OCI-LY7 (cell line): ENCODE measurements at regions of chr12 and their contacts with region 1.

Region 1: GRCh38 chr12:11793921-11794710 is 144.6 kb downstream of the ETV6 start:
- DNase-seq: no peak
- H3K4me3 ChIP-seq: no peak overlapping the region
- H3K27ac ChIP-seq: no peak overlapping the region
- H3K4me1 ChIP-seq: peaks cover 21% of the 10 kb centered on the region
- CTCF ChIP-seq: no peak

Region 2: DNA sequence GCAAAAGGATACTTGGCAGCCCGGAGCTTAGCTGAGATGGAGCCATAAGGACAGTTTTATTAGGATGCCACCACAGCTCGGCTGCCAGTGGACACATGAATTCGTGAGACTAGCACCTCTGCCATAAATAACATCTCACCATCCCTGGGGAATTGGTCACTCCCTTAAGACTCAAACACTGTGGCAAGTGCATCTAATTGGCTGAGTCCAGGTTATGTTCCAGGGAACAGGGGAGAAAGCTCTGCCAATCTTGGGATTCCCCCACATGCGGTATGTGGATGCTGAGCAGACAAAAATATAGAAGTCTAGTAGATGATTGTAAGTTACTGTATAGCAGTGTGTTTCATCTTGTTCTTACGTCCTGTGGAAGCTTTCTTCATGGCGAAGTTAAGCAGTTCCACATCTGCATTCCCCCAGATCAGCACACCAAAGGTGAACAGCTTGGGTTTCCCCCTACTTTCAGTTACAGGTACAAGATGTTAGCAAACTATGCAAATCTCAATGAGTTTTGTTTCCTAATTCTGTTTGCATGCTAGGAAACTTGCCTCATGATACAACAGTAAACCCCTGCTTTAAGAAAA is 13.5 kb before region 1 on chr12:
- CTCF ChIA-PET with region 1: no interaction called
- POLR2A ChIA-PET with region 1: interaction called, 12 read pairs
- intact Hi-C with region 1: no loop called
- DNase-seq: peak; percentile 58
- H3K4me3 ChIP-seq: peak overlapping the region; percentile 51
- H3K27ac ChIP-seq: peak overlapping the region; percentile 41
- H3K4me1 ChIP-seq: peaks cover 79% of the 10 kb centered on the region
- CTCF ChIP-seq: no peak

Region 3: DNA sequence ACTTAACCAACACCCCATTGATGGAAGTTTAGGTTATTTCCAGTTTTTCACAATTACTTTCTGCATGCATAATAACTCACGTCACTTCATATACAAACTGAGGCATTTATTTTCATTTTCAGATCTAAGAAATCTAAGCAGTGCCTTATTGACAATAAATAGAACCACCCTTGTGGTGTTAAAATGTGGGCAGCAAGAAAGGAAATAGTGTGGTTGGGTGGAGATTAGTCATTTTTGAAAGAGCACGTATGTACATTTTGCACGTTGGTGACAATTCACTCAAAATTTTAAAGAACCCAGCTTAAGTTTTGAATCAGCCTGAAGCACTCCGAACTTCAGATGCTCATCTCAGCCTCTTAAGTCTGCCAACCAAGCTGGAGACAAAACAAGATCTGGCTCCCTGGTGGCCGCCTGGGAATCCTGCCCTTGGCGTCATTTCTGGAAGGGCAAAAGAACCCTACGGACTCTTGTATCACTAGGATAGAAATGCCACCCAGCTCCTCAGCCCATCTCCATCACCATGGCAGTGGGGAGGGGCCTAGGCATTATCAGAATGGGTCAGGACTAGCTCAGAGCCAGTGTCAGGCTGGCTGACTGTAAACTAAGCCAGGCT is 187.1 kb after region 1 on chr12:
- CTCF ChIA-PET with region 1: no interaction called
- POLR2A ChIA-PET with region 1: no interaction called
- intact Hi-C with region 1: no loop called
- DNase-seq: no peak
- H3K4me3 ChIP-seq: no peak overlapping the region
- H3K27ac ChIP-seq: no peak overlapping the region
- H3K4me1 ChIP-seq: no peaks in the 10 kb centered on the region
- CTCF ChIP-seq: no peak